Aorta (tissue), 5 donors: ENCODE measurements at regions of chr1 and their contacts with region 1.

Region 1: GRCh38 chr1:41516168-41517061 is 31.9 kb upstream of the EDN2 start:
- DNase-seq: peak; percentile 91 to 97
- ATAC-seq: peak; percentile 96
- H3K4me3 ChIP-seq: no peak overlapping the region
- H3K27ac ChIP-seq: no peak overlapping the region
- H3K4me1 ChIP-seq: no peaks in the 10 kb centered on the region
- H3K27me3 ChIP-seq: no peaks in the 10 kb centered on the region

Region 2: DNA sequence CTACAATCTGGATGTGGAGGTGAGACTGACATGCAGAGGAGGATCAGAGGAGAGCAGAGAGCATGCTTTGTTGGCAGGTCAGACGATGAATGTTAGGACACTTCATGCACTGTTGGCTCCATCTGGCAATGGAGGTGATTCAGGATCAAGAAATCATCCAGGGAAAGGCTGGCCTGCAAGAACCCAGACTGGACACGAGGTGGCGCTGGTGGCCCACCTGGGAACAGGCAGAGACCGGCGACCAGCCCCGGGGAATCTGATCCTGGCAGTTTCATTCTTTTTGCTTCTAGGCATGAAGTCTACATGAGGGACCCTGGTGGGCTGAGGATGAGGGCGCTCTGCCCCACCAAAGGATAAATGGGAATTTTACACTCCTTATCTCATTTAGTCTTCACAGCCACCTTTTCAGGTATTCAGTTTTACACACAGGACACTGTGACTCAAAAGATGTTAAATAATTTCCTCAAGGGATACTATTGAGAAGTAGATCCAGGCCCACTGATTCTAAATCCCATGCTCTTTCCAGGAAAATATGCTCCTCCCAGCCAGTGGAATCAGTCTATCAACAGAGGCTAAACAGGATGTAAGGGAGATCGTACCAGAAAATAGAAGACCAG is 248.2 kb before region 1 on chr1:
- intact Hi-C with region 1: loop called in 1 of 2 experiments (anchors 10 kb)
- DNase-seq: peak; percentile 82 to 89
- ATAC-seq: peak; percentile 90
- H3K4me3 ChIP-seq: no peak overlapping the region
- H3K27ac ChIP-seq: no peak overlapping the region
- H3K4me1 ChIP-seq: no peaks in the 10 kb centered on the region
- H3K27me3 ChIP-seq: no peaks in the 10 kb centered on the region

Region 3: GRCh38 chr1:41589395-41589794 is 73.0 kb after region 1 on chr1:
- intact Hi-C with region 1: no loop called
- DNase-seq: no peak
- ATAC-seq: no peak
- H3K4me3 ChIP-seq: no peak overlapping the region
- H3K27ac ChIP-seq: no peak overlapping the region
- H3K4me1 ChIP-seq: no peaks in the 10 kb centered on the region
- H3K27me3 ChIP-seq: no peaks in the 10 kb centered on the region

Region 4: DNA sequence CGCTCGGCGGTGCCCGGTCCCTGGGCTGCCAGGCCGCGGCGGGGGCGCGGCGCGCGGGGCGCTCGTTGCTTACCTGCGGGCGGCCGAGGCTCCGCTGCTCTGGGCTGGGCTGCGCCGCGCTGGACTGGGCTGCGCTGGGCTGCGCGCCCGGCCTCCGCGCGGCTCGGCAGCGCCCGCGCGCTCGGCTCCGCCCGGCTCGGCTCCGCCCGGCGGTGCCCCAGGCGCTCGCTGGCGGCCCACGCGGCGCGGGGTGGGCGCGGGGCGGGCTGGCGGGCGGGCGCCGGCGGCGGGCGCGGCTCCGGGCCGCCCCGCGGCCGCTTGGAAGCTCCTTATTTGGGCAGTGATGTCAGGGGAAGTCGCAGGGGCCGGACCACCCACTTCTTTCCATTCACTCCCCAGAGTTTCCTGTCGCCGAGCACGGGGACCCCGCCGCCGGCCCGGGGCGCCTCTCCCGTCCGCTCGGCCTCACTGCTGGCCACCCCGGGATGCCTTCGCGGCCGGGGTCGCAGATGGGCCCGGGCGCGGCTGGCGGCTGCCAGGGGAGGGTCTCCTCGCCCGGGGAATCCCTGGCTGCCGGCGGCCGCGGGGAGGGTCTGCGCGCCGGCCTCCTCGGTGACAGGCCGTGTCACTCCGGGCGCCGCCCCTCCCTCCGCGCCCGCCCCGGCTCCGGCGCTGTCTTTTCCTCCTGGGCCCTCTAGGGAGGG is 145.8 kb after region 1 on chr1:
- intact Hi-C with region 1: loop called in 1 of 2 experiments (anchors 10 kb)
- DNase-seq: peak; percentile 89 to 94
- ATAC-seq: peak; percentile 72
- H3K4me3 ChIP-seq: peak overlapping the region; percentile 62 to 77
- H3K27ac ChIP-seq: peak overlapping the region; percentile 57 to 78
- H3K4me1 ChIP-seq: peaks cover 0 to 3% of the 10 kb centered on the region in 2 donors
- H3K27me3 ChIP-seq: no peaks in the 10 kb centered on the region